AG04449 (cell line): ENCODE measurements at regions of chr22 and their contacts with region 1.

Region 1: DNA sequence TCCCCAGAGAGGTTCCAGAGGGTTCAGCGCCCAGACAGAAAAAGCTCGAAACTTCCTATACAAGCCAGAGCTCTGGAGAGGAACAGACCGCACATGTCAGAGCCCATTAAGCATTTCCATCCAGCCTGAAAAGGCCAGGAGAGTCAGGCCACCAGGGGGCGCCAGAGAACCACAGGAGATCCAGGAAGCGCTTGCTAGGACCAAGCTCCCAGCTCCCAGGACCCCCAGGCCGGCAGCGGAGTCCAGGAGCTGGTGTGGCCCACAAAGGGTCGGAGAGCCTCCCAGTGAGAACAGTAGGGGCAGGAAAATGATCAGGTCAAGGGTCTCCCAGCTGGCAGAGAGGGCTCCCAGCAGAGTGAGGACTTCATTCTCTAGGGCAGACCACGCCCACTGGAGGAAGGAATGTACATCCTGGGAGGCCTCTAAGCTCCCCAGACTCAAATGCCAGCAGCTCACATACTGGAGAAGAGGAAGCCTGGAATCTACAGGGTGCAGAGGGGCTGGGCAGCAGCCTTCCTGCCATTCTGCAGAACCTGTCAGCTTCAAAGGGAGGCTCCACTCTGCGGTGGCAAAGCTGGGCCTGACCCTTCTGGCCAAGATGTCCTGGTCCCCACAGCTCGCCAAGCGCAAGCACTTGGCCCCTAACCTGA is 2.1 kb upstream of the MEI1 start:
- DNase-seq: peak; percentile 31
- H3K4me3 ChIP-seq: peak overlapping the region; percentile 9; the same call in 1 of the 2 replicates
- CTCF ChIP-seq: peak; percentile 93

Region 2: DNA sequence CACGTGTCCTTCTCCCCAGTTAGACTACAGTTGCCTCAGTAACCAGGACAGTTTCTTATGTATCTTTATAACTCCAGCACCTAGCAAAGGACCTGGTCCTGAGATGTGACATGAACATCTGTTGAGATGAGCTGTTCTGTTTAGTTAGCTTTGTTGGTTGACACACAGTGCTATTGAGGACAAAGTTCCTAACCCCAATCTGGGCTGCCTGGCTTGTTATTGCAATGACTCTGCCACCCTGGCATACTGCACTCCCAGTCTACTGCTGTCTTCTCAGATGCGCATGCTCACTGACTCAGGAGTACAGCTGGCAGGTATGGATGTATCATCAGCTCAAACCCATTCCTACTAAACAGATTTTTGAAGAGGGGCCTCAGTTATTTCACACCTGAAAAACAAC is 83.8 kb before region 1 on chr22:
- CTCF ChIA-PET with region 1: no interaction called
- POLR2A ChIA-PET with region 1: no interaction called
- DNase-seq: no peak
- H3K4me3 ChIP-seq: no peak overlapping the region
- CTCF ChIP-seq: no peak

Region 3: DNA sequence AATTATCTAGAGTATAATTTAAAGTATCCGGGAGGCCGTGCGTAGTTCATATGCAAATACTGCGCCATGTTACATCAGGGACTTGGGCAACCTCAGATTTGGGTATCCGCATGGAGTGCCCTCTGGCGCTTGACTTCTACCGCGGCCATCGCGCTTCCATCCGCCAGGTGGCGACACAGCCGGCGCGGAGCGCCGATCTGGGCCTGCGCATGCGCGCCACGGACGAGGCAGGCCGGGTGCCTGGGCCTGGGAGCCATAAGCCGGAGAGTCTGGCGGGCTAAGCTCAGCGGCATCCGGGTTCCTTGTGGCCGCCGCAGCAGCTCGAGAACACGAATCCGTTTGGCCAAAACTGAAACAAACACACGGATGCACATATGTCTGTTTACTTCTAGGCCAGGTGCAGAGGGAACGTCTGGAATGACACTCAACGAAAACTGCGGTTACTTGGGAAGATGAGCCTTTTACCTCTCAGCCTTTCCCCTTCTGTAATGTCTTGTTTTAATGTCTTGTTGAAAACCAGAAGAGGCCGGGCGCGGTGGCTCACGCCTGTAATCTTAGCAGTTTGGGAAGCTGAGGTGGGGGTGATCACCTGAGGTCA is 30.5 kb before region 1 on chr22:
- CTCF ChIA-PET with region 1: interaction called, 58 read pairs
- POLR2A ChIA-PET with region 1: interaction called, 3 read pairs
- DNase-seq: no peak
- H3K4me3 ChIP-seq: peak overlapping the region; percentile 53
- CTCF ChIP-seq: peak; percentile 100

Region 4: DNA sequence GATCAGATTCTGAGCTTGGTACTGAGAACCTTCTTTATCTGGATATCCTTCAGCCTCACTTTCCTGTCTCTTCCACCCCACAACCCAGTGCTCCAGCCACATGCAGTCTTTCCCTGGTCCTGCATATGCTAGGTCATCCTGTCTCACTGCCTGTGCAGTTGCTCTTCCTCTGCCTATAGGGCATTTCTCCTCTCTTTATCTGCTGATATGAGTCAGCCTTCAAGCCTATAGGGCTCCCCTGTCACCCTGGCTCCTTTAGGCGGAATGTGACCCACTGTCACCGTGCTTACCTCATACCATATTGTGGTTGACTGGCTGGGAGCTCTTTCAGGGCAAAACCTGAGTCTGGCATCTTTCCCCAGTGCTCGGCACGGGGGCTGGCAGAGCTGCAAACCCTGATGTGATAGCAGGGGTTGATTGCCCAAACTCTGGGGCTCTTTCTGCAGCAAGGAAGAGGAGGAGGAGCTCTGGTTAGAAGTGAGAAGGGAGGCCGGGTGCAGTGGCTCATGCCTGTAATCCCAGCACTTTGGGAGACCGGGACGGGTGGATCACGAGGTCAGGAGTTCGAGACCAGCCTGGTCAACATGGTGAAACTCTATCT is 28.4 kb after region 1 on chr22:
- CTCF ChIA-PET with region 1: interaction called, 29 read pairs
- POLR2A ChIA-PET with region 1: no interaction called
- DNase-seq: no peak
- H3K4me3 ChIP-seq: no peak overlapping the region
- CTCF ChIP-seq: no peak

Region 5: GRCh38 chr22:41800348-41801146 is 103.3 kb after region 1 on chr22 and contains the start of gene CCDC134:
- CTCF ChIA-PET with region 1: interaction called, 30 read pairs
- POLR2A ChIA-PET with region 1: no interaction called
- DNase-seq: no peak
- H3K4me3 ChIP-seq: peak within 1 kb of the TSS; percentile 99
- CTCF ChIP-seq: no peak

Region 6: DNA sequence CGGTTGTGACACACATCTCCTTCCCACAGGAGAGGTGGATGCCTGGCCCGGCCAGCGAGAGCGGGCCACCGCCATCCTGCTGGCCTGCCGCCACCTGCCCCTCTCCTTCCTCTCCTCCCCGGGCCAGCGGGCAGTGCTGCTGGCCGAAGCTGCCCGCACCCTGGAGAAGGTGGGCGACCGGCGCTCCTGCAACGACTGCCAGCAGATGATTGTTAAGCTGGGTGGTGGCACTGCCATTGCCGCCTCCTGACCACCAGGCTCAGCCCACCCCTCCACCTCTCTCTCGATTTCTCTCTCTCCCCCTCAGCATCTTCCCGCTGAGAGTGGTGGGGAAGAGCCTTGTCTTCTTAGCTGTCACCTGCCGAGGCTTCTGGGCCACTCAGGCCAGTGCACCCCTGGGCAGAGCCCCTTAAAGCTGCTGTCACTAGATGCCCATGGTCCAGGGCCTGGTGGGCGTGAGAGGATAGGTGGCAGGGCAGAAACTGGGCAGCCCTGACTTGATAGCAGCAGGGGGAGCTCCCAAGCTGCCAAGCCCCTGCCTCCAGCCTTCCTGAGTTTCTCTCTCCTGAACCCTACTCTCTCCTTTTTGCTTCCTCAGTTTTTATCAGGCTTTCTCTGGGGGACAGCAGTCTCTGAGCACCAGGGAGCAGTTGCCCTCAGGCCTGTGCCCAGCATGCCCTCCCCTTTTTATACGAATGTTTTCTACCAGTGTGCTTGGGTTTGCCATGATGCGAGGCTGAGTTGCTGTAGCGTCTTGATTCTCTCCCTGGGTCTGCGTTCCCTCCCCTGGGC is 208.4 kb after region 1 on chr22:
- CTCF ChIA-PET with region 1: interaction called, 12 read pairs
- POLR2A ChIA-PET with region 1: no interaction called
- DNase-seq: no peak
- H3K4me3 ChIP-seq: no peak overlapping the region
- CTCF ChIP-seq: no peak

Region 7: DNA sequence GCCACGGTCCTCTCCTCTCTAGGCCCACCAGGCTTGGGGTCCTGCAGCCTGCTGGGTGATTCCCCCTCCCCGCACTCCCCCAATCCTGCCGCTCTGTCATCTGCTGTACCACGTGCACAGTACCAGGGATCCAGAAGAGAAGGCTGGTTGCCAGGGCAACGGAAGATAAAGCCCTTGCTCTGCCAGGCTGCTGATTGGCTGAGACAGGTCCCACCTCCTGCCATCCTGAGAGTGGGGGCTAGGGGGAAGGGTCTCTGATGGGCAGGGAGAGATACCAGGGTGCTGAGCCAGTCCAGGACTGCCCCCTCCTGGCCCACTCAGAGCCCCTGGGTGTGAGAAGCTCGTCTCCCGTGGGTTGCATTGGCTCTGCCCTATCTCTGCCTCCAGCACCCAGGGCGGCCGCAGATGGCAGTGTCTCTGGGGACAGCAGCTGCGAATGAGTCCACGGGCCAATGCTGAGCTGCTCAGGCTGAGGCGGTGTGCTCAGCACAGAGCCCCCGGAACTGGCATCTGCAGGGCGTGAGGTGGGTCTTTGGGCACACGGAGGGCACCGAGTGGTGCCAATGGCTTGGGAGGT is 254.7 kb after region 1 on chr22 and contains the start of gene SMIM45:
- CTCF ChIA-PET with region 1: interaction called, 387 read pairs
- POLR2A ChIA-PET with region 1: no interaction called
- DNase-seq: no peak
- H3K4me3 ChIP-seq: no peak within 1 kb of the TSS
- CTCF ChIP-seq: no peak